ENCODE measurements at regions of chr14 and their contacts with region 1.

Region 1: GRCh38 chr14:22549981-22550673 is 38.9 kb downstream of the DAD1 start:
- DNase-seq: peak; percentile 67
- H3K4me3 Mint-ChIP-seq: peak overlapping the region; percentile 77
- H3K27ac Mint-ChIP-seq: peak overlapping the region; percentile 98
- H3K4me1 Mint-ChIP-seq: peaks cover 93% of the 10 kb centered on the region
- H3K27me3 Mint-ChIP-seq: no peaks in the 10 kb centered on the region

Region 2: DNA sequence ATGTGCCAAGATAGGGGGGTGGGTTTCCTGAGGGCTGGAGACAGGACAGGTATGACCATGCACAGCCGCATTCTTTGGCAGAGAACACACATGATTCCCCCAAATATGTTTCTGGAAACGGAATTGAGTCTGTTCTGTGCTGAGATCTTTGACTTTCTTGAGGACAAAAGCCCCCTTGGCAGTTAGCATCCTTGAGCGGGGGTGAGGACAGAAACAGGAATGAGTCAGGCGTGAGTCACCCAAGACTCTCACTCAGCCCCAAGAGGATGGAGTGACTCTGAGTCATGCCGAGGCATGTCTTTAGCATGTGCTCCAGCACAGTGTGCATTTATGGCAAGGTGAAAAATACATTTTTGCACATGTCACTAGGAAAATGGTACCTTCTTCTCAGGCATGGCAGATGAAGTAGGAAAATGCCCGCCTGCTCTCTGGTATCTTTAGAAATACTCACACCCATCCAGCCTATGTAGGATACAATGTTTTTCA is 13.2 kb before region 1 on chr14:
- intact Hi-C with region 1: loop called (anchors 1 kb)
- DNase-seq: peak; percentile 75
- H3K4me3 Mint-ChIP-seq: peak overlapping the region; percentile 80
- H3K27ac Mint-ChIP-seq: peak overlapping the region; percentile 94
- H3K4me1 Mint-ChIP-seq: peaks cover 91% of the 10 kb centered on the region
- H3K27me3 Mint-ChIP-seq: no peaks in the 10 kb centered on the region

Region 3: DNA sequence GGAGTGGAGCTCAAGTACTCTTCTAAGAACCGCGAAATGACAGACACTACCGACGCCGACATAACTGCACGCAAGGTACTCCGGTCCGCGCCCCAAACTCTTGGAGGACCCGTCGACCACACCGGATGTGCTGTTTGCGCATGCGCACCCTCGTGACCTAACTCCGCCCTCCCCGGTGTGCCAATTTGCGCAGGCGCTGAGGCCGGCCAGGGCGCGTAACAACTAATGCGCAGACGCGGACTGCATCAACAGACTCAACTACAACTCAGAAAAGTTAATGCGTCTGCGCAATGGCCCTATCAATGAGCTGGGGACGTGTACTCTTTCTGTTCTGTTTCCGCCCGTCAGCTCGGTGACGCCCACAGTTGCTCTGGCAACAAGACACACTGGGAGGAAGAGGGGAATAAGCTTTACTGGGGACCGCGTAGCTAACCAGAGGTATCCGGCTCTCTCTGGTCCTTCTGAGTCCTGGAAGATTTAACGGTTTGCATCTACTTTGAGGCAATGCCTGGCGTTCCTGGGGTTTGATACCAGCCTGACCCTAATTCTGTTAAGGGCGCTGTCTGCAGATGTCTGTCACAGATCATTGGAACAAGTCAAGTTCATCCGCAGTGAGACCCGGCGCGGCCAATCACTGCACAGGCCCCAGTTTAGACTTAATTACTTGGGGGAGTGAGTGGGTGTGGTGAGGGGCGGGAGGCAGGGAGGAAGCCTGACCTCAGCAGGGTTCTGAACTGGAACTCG is 39.1 kb after region 1 on chr14 and contains the start of gene DAD1:
- intact Hi-C with region 1: no loop called
- DNase-seq: peak; percentile 100
- H3K4me3 Mint-ChIP-seq: peak within 1 kb of the TSS; percentile 88
- H3K27ac Mint-ChIP-seq: peak within 1 kb of the TSS; percentile 95
- H3K4me1 Mint-ChIP-seq: peaks cover 51% of the 10 kb centered on the region
- H3K27me3 Mint-ChIP-seq: peaks cover 10% of the 10 kb centered on the region
- total RNA-seq, gene DAD1: 246 and 256 TPM in 2 replicates

Region 4: GRCh38 chr14:22614224-22614799 is 64.2 kb after region 1 on chr14:
- intact Hi-C with region 1: no loop called
- DNase-seq: no peak
- H3K4me3 Mint-ChIP-seq: no peak overlapping the region
- H3K27ac Mint-ChIP-seq: no peak overlapping the region
- H3K4me1 Mint-ChIP-seq: no peaks in the 10 kb centered on the region
- H3K27me3 Mint-ChIP-seq: peaks cover 2% of the 10 kb centered on the region

Measured in activated T-helper 2 cell treated with anti-CD3 and anti-CD28 coated beads, Interferon-gamma antibody, Interleukin-2, Interleukin-4, amounts not matched to agents 10 μg/mL and 5 μg/mL and 100 μg/mL, durations not matched to agents 14 hours and 24 hours and 36 hours (primary cell).